ENCODE measurements at regions of chr5 and their contacts with region 1.

Region 1: DNA sequence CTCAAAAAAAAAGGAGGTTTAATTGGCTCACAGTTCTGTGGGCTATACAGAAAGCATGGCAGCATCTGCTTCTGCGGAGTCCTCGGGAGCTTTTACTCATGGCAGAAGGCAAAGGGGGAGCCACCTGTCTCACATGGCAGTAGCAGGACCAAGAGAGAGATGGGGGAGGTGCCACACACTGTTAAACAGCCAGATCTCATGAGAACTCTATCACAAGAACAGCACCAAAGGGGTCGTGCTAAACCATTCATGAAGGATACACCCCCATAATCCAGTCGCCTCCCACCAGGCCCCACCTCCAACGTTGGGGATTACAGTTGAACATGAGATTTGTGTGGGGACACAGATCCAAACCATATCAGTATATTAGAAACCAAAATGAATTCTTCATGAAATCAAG is 28.3 kb upstream of the CXXC5 start:
- DNase-seq: no peak
- ATAC-seq: no peak
- H3K4me3 ChIP-seq: no peak overlapping the region
- H3K27ac ChIP-seq: no peak overlapping the region
- H3K4me1 ChIP-seq: peaks cover 0 to 5% (median 0%) of the 10 kb centered on the region in 9 donors
- H3K27me3 ChIP-seq: no peaks in the 10 kb centered on the region
- CTCF ChIP-seq: no peak

Region 2: GRCh38 chr5:139574641-139575312 is 45.1 kb before region 1 on chr5:
- intact Hi-C with region 1: loop called in 1 of 10 experiments (anchors 10 kb)
- DNase-seq: no peak
- ATAC-seq: peak in 3 of 8 donors; percentile 43 to 57 (median 50)
- H3K4me3 ChIP-seq: no peak overlapping the region
- H3K27ac ChIP-seq: no peak overlapping the region
- H3K4me1 ChIP-seq: peaks cover 9 to 89% (median 71%) of the 10 kb centered on the region in 9 donors
- H3K27me3 ChIP-seq: no peaks in the 10 kb centered on the region
- CTCF ChIP-seq: peak; percentile 9 to 74 (median 60)

Region 3: GRCh38 chr5:139660923-139661814 is 41.3 kb after region 1 on chr5:
- intact Hi-C with region 1: no loop called
- DNase-seq: peak; percentile 78 to 82
- ATAC-seq: peak; percentile 54 to 78 (median 66)
- H3K4me3 ChIP-seq: peak overlapping the region in 8 of 10 donors; percentile 8 to 49 (median 29)
- H3K27ac ChIP-seq: peak overlapping the region; percentile 86 to 97 (median 92)
- H3K4me1 ChIP-seq: peaks cover 53 to 100% (median 87%) of the 10 kb centered on the region in 9 donors
- H3K27me3 ChIP-seq: no peaks in the 10 kb centered on the region
- CTCF ChIP-seq: no peak

Region 4: GRCh38 chr5:139844472-139845145 is 224.7 kb after region 1 on chr5:
- intact Hi-C with region 1: loop called in 1 of 10 experiments (anchors 10 kb)
- DNase-seq: peak; percentile 66 to 69
- ATAC-seq: peak in 4 of 8 donors; percentile 29 to 37 (median 35)
- H3K4me3 ChIP-seq: no peak overlapping the region
- H3K27ac ChIP-seq: no peak overlapping the region
- H3K4me1 ChIP-seq: peaks cover 3 to 25% (median 17%) of the 10 kb centered on the region in 9 donors
- H3K27me3 ChIP-seq: peaks cover 0 to 44% (median 0%) of the 10 kb centered on the region in 7 donors
- CTCF ChIP-seq: peak; percentile 38 to 76 (median 69)